A549 (cell line): ENCODE measurements at regions of chr4 and their contacts with region 1.

Region 1: DNA sequence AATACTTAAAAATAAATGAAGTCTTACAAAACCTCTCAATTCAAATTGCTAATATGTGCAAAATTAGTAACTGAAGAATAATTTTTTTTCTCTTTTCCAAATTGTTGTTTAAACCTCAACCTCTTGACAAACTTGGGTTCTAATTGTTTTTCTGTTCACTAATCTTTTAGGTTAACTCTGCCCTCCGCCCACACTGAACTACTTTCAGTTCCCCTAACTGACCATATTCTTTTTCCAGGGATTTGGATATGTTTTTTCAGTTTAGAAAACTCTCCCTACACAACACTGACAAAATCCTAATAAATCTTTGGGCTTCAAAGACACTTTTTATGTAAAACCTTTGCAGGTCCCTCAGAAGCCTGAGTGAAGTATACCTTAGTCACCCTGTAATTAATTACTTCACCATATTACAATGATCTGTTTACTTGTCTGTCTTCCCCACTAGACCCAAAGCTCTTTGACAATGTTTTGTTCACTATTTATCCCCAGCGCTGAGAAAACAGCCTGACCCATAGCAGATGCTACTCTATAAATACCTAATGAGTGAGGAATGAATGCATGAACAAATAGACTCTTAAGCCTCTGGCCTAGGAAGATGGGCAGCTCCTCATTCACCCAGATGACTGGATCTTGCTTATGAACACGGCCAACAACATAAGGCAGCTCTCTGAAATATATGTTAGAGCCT is 134.9 kb downstream of the MAML3 start:
- DNase-seq: peak in 1 of 2 experiments; percentile 91
- ATAC-seq: peak; percentile 77 to 87
- H3K4me3 ChIP-seq: peak overlapping the region; percentile 19; the same call in 1 of the 3 replicates
- H3K27ac ChIP-seq: peak overlapping the region; percentile 93
- H3K4me1 ChIP-seq: peaks cover 76% of the 10 kb centered on the region
- CTCF ChIP-seq: no peak
- EP300 ChIP-seq: peak in 1 of 2 experiments; percentile 20; a peak in 1 of 5 replicates
- POLR2A ChIP-seq: no peak
- RAD21 ChIP-seq: peak; percentile 17 to 20; a peak in 1 of 5 replicates

Region 2: GRCh38 chr4:139887962-139888735 is 130.9 kb before region 1 on chr4:
- CTCF ChIA-PET with region 1: no interaction called
- POLR2A ChIA-PET with region 1: no interaction called
- DNase-seq: no peak
- ATAC-seq: peak in 1 of 2 experiments; percentile 51; a peak in 3 of 6 replicates
- H3K4me3 ChIP-seq: no peak overlapping the region
- H3K27ac ChIP-seq: no peak overlapping the region
- H3K4me1 ChIP-seq: peaks cover 30% of the 10 kb centered on the region
- CTCF ChIP-seq: no peak
- EP300 ChIP-seq: no peak
- POLR2A ChIP-seq: no peak
- RAD21 ChIP-seq: no peak

Region 3: GRCh38 chr4:140037357-140038030 is 18.4 kb after region 1 on chr4:
- CTCF ChIA-PET with region 1: interaction called, 4 read pairs
- POLR2A ChIA-PET with region 1: interaction called, 26 read pairs
- DNase-seq: peak; percentile 64 to 93
- ATAC-seq: peak; percentile 94 to 97
- H3K4me3 ChIP-seq: peak overlapping the region; percentile 18; the same call in 1 of the 3 replicates
- H3K27ac ChIP-seq: peak overlapping the region; percentile 96
- H3K4me1 ChIP-seq: peaks cover 57% of the 10 kb centered on the region
- CTCF ChIP-seq: no peak
- EP300 ChIP-seq: peak; percentile 81; a peak in 4 of 5 replicates
- POLR2A ChIP-seq: no peak
- RAD21 ChIP-seq: peak in 1 of 2 experiments; percentile 37; a peak in 2 of 5 replicates

Region 4: GRCh38 chr4:140141210-140141835 is 122.2 kb after region 1 on chr4:
- CTCF ChIA-PET with region 1: no interaction called
- POLR2A ChIA-PET with region 1: no interaction called
- DNase-seq: no peak
- ATAC-seq: no peak
- H3K4me3 ChIP-seq: no peak overlapping the region
- H3K27ac ChIP-seq: peak overlapping the region in 1 of 2 experiments; percentile 72; a peak in 3 of 6 replicates
- H3K4me1 ChIP-seq: peaks cover 66% of the 10 kb centered on the region
- CTCF ChIP-seq: no peak
- EP300 ChIP-seq: no peak
- POLR2A ChIP-seq: no peak
- RAD21 ChIP-seq: no peak